ENCODE measurements at regions of chr1 and their contacts with region 1.

Region 1: GRCh38 chr1:70509996-70510876 is 99.2 kb downstream of the CTH start:
- DNase-seq: no peak
- H3K4me3 Mint-ChIP-seq: no peak overlapping the region
- H3K27ac Mint-ChIP-seq: no peak overlapping the region
- H3K4me1 Mint-ChIP-seq: no peaks in the 10 kb centered on the region
- H3K27me3 Mint-ChIP-seq: peaks cover 14% of the 10 kb centered on the region

Region 2: GRCh38 chr1:70247768-70248167 is 262.5 kb before region 1 on chr1:
- CTCF ChIA-PET with region 1: no interaction called
- POLR2A ChIA-PET with region 1: no interaction called
- intact Hi-C with region 1: loop called (anchors 5 kb)
- DNase-seq: no peak
- H3K4me3 Mint-ChIP-seq: no peak overlapping the region
- H3K27ac Mint-ChIP-seq: peak overlapping the region; percentile 70
- H3K4me1 Mint-ChIP-seq: peaks cover 29% of the 10 kb centered on the region
- H3K27me3 Mint-ChIP-seq: no peaks in the 10 kb centered on the region

Region 3: GRCh38 chr1:70288166-70288565 is 222.1 kb before region 1 on chr1:
- CTCF ChIA-PET with region 1: no interaction called
- POLR2A ChIA-PET with region 1: no interaction called
- intact Hi-C with region 1: loop called (anchors 10 kb)
- DNase-seq: no peak
- H3K4me3 Mint-ChIP-seq: no peak overlapping the region
- H3K27ac Mint-ChIP-seq: no peak overlapping the region
- H3K4me1 Mint-ChIP-seq: peaks cover 3% of the 10 kb centered on the region
- H3K27me3 Mint-ChIP-seq: no peaks in the 10 kb centered on the region